Caco-2 (cell line): ENCODE measurements at regions of chr5 and their contacts with region 1.

Region 1: DNA sequence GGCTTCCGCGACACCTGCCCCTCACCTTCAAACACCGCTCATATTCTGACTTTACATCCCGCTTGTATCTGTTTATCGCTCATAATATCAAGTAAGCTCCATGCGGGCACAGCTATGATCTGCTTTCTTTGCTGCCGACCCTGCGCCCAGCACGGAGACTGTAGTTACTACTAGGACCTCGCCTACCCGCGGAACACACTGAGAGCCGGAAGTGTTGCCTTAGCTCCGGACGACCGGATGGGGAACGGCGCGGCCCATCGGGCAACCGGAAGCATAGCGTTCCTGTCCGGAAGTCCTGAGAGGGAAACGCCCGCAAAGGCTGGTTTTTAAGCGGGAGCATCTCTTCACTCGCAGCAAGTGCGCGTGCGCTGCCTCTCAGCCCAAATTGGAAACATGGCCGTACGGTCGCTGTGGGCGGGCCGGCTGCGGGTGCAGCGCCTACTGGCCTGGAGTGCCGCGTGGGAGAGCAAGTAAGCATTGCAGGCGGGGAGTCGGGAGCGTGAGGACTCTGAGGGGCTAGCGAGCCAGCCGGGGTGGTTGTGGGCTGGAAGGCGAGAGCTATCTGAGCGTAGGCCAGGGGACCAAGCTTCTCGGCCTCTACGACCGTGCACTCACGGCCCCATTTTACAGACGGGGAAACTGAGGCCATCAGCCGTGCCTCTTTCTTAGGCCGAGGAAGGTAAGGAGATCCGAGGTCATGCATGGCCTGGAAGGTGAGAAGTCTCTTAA is at the start of gene GRPEL2:
- DNase-seq: peak; percentile 95 to 97
- H3K4me3 ChIP-seq: peak within 1 kb of the TSS; percentile 88
- H3K4me3 Mint-ChIP-seq: peak within 1 kb of the TSS; percentile 95
- H3K27ac Mint-ChIP-seq: peak within 1 kb of the TSS; percentile 93
- H3K4me1 ChIP-seq: peaks cover 10% of the 10 kb centered on the region
- H3K4me1 Mint-ChIP-seq: no peaks in the 10 kb centered on the region
- H3K27me3 ChIP-seq: no peaks in the 10 kb centered on the region
- H3K27me3 Mint-ChIP-seq: no peaks in the 10 kb centered on the region
- CTCF ChIP-seq: no peak
- total RNA-seq, gene GRPEL2: 33.6 and 36.8 TPM in 2 replicates

Region 2: DNA sequence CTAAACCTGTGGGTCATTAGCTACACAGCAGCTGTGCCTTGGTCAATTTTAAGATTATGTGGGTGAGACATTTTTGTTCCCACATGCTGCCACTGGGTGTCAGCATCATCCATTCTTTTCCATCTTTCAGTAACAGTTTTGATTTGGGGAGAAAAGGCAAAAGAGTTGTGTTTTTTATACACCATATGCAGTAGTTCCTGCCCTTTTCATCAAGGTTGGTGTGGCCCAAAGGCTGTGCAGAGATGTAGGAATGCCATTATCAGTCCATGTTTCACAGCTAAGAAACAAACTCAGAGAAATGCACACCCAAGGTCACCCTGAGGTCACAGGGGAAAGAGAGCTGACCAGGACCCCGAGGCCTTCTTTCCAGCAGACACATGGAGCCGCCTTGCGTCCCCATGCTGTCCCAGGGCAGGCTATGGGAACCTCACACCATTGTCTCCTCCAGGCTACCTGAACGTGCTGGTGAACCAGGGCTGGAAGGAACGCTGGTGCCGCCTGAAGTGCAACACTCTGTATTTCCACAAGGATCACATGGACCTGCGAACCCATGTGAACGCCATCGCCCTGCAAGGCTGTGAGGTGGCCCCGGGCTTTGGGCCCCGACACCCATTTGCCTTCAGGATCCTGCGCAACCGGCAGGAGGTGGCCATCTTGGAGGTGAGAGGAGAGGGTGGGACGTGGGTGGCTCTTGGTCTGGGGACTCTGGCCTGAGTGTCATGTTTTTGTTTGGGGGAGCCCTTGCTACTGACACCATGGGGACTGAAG is 27.8 kb before region 1 on chr5:
- CTCF ChIA-PET with region 1: interaction called, 8 read pairs
- POLR2A ChIA-PET with region 1: interaction called, 11 read pairs
- intact Hi-C with region 1: loop called (anchors 1 kb)
- DNase-seq: peak in 1 of 2 experiments; percentile 50
- H3K4me3 ChIP-seq: no peak overlapping the region
- H3K4me3 Mint-ChIP-seq: no peak overlapping the region
- H3K27ac Mint-ChIP-seq: no peak overlapping the region
- H3K4me1 ChIP-seq: peaks cover 16% of the 10 kb centered on the region
- H3K4me1 Mint-ChIP-seq: peaks cover 11% of the 10 kb centered on the region
- H3K27me3 ChIP-seq: no peaks in the 10 kb centered on the region
- H3K27me3 Mint-ChIP-seq: peaks cover 7% of the 10 kb centered on the region
- CTCF ChIP-seq: peak; percentile 75 to 82

Region 3: GRCh38 chr5:149333711-149334443 is 11.4 kb before region 1 on chr5:
- CTCF ChIA-PET with region 1: no interaction called
- POLR2A ChIA-PET with region 1: no interaction called
- intact Hi-C with region 1: loop called (anchors 1 kb)
- DNase-seq: no peak
- H3K4me3 ChIP-seq: no peak overlapping the region
- H3K4me3 Mint-ChIP-seq: no peak overlapping the region
- H3K27ac Mint-ChIP-seq: no peak overlapping the region
- H3K4me1 ChIP-seq: peaks cover 9% of the 10 kb centered on the region; the same call in 1 of the 2 replicates
- H3K4me1 Mint-ChIP-seq: peaks cover 14% of the 10 kb centered on the region
- H3K27me3 ChIP-seq: no peaks in the 10 kb centered on the region
- H3K27me3 Mint-ChIP-seq: peaks cover 2% of the 10 kb centered on the region
- CTCF ChIP-seq: no peak

Region 4: GRCh38 chr5:149357370-149358293 is 12.3 kb after region 1 on chr5 and contains the start of gene PCYOX1L:
- CTCF ChIA-PET with region 1: interaction called, 8 read pairs
- POLR2A ChIA-PET with region 1: interaction called, 42 read pairs
- intact Hi-C with region 1: loop called (anchors 1 kb)
- DNase-seq: peak; percentile 95 to 97
- H3K4me3 ChIP-seq: peak within 1 kb of the TSS; percentile 68
- H3K4me3 Mint-ChIP-seq: peak within 1 kb of the TSS; percentile 90
- H3K27ac Mint-ChIP-seq: no peak within 1 kb of the TSS
- H3K4me1 ChIP-seq: peaks cover 6% of the 10 kb centered on the region
- H3K4me1 Mint-ChIP-seq: no peaks in the 10 kb centered on the region
- H3K27me3 ChIP-seq: no peaks in the 10 kb centered on the region
- H3K27me3 Mint-ChIP-seq: no peaks in the 10 kb centered on the region
- CTCF ChIP-seq: no peak
- total RNA-seq, gene PCYOX1L: 8.7 and 10.4 TPM in 2 replicates